Endothelial cell of umbilical vein (primary cell): ENCODE measurements at regions of chr11 and their contacts with region 1.

Region 1: GRCh38 chr11:22787551-22788162 is 41.9 kb downstream of the SVIP start:
- DNase-seq: peak; percentile 61
- H3K4me3 ChIP-seq: no peak overlapping the region
- H3K27ac ChIP-seq: no peak overlapping the region
- H3K4me1 ChIP-seq: peaks cover 34% of the 10 kb centered on the region
- H3K27me3 ChIP-seq: no peaks in the 10 kb centered on the region
- CTCF ChIP-seq: peak; percentile 52 to 53
- POLR2A ChIP-seq: no peak

Region 2: DNA sequence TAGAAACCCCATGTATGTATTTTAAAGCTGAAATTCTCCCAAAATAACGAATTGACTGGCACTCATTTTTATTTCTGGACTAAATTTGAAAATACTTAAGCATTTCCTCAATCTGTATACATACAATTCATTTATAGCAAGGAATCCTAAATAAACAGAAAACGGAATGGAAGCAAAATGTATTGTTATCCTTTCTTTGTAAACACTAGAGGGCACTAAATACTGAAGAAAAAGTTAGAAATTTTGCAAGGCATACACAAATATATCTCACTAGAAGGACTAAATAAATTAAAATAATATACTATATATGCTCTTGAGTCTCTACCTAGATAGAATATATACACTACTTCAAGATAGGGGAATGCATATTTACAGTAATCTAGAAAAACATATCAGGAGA is 617.8 kb before region 1 on chr11:
- CTCF ChIA-PET with region 1: no interaction called
- POLR2A ChIA-PET with region 1: no interaction called
- dilution Hi-C with region 1: no loop called
- intact Hi-C with region 1: loop called (anchors 5 kb)
- DNase-seq: no peak
- H3K4me3 ChIP-seq: no peak overlapping the region
- H3K27ac ChIP-seq: no peak overlapping the region
- H3K4me1 ChIP-seq: no peaks in the 10 kb centered on the region
- H3K27me3 ChIP-seq: no peaks in the 10 kb centered on the region
- CTCF ChIP-seq: peak in 1 of 2 donors; percentile 4
- POLR2A ChIP-seq: no peak

Region 3: DNA sequence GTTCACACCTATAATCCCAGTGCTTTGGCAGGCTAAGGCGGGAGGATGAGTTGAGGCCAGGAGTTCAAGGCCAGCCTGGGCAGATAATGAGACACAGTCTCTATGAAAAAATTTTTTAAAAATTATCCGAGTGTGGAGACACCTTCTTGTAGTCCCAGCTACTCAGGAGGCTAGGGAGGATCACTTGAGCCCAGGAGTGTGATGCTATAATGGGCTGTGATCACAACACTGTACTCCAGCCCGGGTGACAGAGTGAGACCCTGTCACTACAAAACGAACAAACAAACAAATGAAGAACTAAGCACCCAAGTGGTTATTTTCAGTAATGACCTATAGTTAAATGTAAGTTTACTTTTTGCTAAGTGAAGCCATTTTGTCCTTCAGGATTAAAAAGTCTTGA is 562.5 kb before region 1 on chr11:
- CTCF ChIA-PET with region 1: no interaction called
- POLR2A ChIA-PET with region 1: no interaction called
- dilution Hi-C with region 1: no loop called
- intact Hi-C with region 1: no loop called
- DNase-seq: no peak
- H3K4me3 ChIP-seq: no peak overlapping the region
- H3K27ac ChIP-seq: no peak overlapping the region
- H3K4me1 ChIP-seq: no peaks in the 10 kb centered on the region
- H3K27me3 ChIP-seq: no peaks in the 10 kb centered on the region
- CTCF ChIP-seq: no peak
- POLR2A ChIP-seq: no peak

Region 4: GRCh38 chr11:22337596-22338485 is 449.8 kb before region 1 on chr11 and contains the start of gene SLC17A6:
- CTCF ChIA-PET with region 1: interaction called, 18 read pairs
- POLR2A ChIA-PET with region 1: no interaction called
- dilution Hi-C with region 1: no loop called
- intact Hi-C with region 1: loop called (anchors 1 kb)
- DNase-seq: peak; percentile 13
- H3K4me3 ChIP-seq: no peak within 1 kb of the TSS
- H3K27ac ChIP-seq: no peak within 1 kb of the TSS
- H3K4me1 ChIP-seq: no peaks in the 10 kb centered on the region
- H3K27me3 ChIP-seq: peaks cover 39 to 60% of the 10 kb centered on the region in 2 experiments
- CTCF ChIP-seq: no peak
- POLR2A ChIP-seq: no peak
- total RNA-seq, gene SLC17A6: not detected in 2 replicates

Region 5: DNA sequence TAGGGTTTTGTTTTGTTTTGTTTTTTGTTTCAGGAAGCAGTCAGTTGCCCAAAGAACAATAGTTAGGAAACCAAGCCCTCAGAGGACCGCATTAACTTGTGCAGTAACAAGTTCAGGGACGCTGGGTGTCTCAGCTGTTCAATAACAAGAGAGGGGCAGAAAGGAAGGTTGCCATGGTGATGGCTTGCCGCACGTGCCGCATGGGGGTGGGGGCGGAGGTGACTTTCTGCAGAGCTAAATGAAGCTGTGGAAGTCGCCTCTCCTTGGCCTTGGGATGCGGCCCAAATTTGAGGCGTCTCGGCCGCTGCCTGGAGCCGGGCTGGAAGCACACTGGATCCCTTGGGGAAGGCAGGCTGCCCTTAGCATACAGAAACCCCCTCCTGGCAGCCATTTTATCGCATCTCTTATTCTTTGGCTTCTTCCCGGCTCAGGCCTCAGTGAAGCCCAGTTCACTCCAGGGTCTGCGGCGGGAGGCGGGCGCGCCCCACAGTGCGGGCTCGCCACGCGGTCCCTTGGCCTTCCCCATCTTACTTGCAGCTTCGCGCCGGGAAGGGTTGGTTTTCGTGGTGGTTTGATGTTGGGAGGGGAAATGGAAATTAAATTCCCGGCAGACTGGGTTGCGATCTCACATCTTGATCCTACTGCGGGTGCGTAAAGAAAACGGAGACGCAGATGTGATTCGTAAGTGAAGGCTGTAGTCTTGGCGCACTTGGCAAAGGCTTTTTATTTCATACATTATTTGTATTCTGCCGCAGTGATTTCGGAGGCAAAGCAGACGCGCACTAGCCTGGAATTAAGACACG is 355.2 kb before region 1 on chr11:
- CTCF ChIA-PET with region 1: interaction called, 12 read pairs
- POLR2A ChIA-PET with region 1: no interaction called
- dilution Hi-C with region 1: no loop called
- intact Hi-C with region 1: loop called (anchors 1 kb)
- DNase-seq: peak; percentile 82
- H3K4me3 ChIP-seq: peak overlapping the region; percentile 20 to 46 (median 45)
- H3K27ac ChIP-seq: peak overlapping the region; percentile 32
- H3K4me1 ChIP-seq: peaks cover 10% of the 10 kb centered on the region
- H3K27me3 ChIP-seq: no peaks in the 10 kb centered on the region
- CTCF ChIP-seq: no peak
- POLR2A ChIP-seq: no peak

Region 6: GRCh38 chr11:22539821-22540256 is 247.8 kb before region 1 on chr11:
- CTCF ChIA-PET with region 1: interaction called, 28 read pairs
- POLR2A ChIA-PET with region 1: no interaction called
- dilution Hi-C with region 1: no loop called
- intact Hi-C with region 1: loop called (anchors 2 kb)
- DNase-seq: peak; percentile 29
- H3K4me3 ChIP-seq: no peak overlapping the region
- H3K27ac ChIP-seq: no peak overlapping the region
- H3K4me1 ChIP-seq: no peaks in the 10 kb centered on the region
- H3K27me3 ChIP-seq: peaks cover 2% of the 10 kb centered on the region in 2 experiments
- CTCF ChIP-seq: peak; percentile 16 to 38
- POLR2A ChIP-seq: no peak

Region 7: GRCh38 chr11:22670830-22671229 is 116.8 kb before region 1 on chr11:
- CTCF ChIA-PET with region 1: interaction called, 86 read pairs
- POLR2A ChIA-PET with region 1: no interaction called
- dilution Hi-C with region 1: no loop called
- intact Hi-C with region 1: loop called (anchors 1 kb)
- DNase-seq: peak; percentile 44
- H3K4me3 ChIP-seq: no peak overlapping the region
- H3K27ac ChIP-seq: no peak overlapping the region
- H3K4me1 ChIP-seq: peaks cover 2% of the 10 kb centered on the region
- H3K27me3 ChIP-seq: peaks cover 38 to 70% of the 10 kb centered on the region in 2 experiments
- CTCF ChIP-seq: no peak
- POLR2A ChIP-seq: no peak

Region 8: DNA sequence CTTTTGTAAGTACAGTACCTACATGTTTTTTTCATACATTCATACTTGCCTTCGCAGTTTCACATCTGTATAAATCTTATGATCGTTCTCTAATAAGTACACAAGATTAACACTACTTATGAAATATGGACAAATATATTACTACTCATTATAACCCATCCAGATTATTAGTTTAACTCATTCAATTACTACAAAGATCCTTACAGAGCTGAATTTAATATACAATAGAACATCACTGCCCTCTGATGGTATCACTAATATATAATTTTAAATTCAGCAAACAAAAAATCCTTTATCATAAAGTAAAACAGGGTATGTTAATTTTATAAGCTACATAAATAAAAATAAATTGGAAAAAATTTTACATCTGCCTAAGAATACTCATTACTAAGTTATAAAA is 34.5 kb after region 1 on chr11:
- CTCF ChIA-PET with region 1: interaction called, 22 read pairs
- POLR2A ChIA-PET with region 1: no interaction called
- dilution Hi-C with region 1: no loop called
- intact Hi-C with region 1: no loop called
- DNase-seq: no peak
- H3K4me3 ChIP-seq: no peak overlapping the region
- H3K27ac ChIP-seq: no peak overlapping the region
- H3K4me1 ChIP-seq: no peaks in the 10 kb centered on the region
- H3K27me3 ChIP-seq: no peaks in the 10 kb centered on the region
- CTCF ChIP-seq: no peak
- POLR2A ChIP-seq: no peak